A673 (cell line): ENCODE measurements at regions of chr13 and their contacts with region 1.

Region 1: DNA sequence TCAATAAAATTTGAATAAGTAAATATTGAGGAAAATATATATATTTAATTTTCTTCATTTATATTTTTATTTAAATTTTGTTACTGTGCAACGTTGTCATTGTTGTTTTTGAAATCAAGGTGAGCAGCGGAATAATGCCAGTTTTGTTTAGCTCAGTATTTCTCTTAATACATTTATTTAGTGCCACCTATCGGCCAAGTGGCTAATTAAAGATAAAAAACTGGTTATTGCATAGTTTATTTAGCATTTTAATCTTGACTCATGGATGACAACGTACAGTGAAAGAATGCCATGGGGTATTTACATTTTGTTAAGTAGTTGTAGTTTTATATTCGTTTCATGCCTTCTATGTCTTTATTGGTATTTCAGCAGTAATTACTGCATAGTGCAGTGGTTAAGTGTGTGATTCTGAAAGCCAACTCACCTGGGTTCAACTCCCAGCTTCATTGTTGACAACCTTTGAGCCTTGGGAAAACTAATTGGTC is 265.9 kb downstream of the MYO16 start:
- DNase-seq: peak; percentile 74
- H3K4me3 ChIP-seq: no peak overlapping the region
- H3K27ac ChIP-seq: no peak overlapping the region
- H3K4me1 ChIP-seq: peaks cover 13% of the 10 kb centered on the region
- H3K27me3 ChIP-seq: no peaks in the 10 kb centered on the region
- CTCF ChIP-seq: peak; percentile 64

Region 2: DNA sequence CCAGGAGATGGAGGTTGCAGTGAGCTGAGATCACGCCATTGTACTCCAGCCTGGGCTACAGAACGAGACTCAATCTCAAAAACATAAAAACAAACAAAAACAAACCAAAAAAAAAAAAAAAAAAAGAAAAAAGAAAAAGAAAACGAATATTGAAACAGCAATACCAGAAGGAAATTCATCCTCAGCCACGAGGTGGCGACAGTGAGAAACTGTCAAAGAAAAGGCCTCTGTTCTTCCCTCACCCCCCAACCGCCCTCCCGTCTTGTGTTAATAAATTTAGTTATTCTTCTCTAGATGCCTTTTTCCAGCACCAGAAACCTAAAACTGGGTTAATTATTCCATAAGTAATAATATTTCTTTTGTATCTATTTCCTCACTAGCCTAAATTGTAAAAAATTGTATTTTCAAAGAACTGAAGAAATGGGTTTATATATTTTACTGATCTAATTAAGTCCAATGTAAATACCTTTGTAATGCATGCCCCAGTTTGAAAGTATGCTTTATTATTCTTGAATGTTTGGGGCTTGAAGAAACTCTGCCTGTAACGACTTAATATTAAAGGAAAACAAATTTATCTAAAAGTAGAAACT is 718.5 kb before region 1 on chr13:
- CTCF ChIA-PET with region 1: no interaction called
- POLR2A ChIA-PET with region 1: no interaction called
- intact Hi-C with region 1: loop called (anchors 5 kb)
- DNase-seq: peak; percentile 61
- H3K4me3 ChIP-seq: no peak overlapping the region
- H3K27ac ChIP-seq: no peak overlapping the region
- H3K4me1 ChIP-seq: no peaks in the 10 kb centered on the region
- H3K27me3 ChIP-seq: no peaks in the 10 kb centered on the region
- CTCF ChIP-seq: peak; percentile 70

Region 3: DNA sequence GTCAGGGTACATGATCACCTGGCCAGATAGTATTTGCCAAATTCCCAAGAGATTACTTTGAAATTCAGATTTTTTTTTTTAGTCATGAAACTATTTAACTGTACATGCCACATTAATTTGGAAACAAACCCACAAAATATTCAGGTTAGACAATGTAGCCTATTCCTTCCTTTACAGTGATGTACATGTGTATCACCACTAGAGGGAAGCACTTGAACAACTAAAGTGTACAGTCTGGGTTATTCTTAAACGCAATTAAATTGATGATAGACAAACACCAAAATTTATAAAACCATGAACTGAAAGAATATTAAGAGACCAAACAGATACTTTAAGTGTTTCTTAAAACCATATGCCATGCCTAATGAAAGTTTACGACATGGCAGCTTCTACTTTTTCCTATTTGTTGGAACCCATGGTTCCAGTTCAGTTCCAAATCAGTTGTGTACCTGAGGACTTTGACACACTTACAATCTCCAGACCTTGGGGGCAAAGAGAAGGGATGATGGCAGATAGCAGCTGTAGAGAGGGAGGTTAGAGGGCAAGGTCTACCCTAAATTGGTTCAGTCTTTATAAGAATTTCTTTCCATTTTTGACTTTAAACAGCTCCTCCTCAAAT is 572.9 kb before region 1 on chr13:
- CTCF ChIA-PET with region 1: interaction called, 3 read pairs
- POLR2A ChIA-PET with region 1: no interaction called
- intact Hi-C with region 1: loop called (anchors 2 kb)
- DNase-seq: peak; percentile 62
- H3K4me3 ChIP-seq: no peak overlapping the region
- H3K27ac ChIP-seq: no peak overlapping the region
- H3K4me1 ChIP-seq: peaks cover 13% of the 10 kb centered on the region
- H3K27me3 ChIP-seq: no peaks in the 10 kb centered on the region
- CTCF ChIP-seq: peak; percentile 78

Region 4: GRCh38 chr13:108508263-108508662 is 387.0 kb before region 1 on chr13:
- CTCF ChIA-PET with region 1: no interaction called
- POLR2A ChIA-PET with region 1: no interaction called
- intact Hi-C with region 1: loop called (anchors 5 kb)
- DNase-seq: peak; percentile 45
- H3K4me3 ChIP-seq: no peak overlapping the region
- H3K27ac ChIP-seq: no peak overlapping the region
- H3K4me1 ChIP-seq: no peaks in the 10 kb centered on the region
- H3K27me3 ChIP-seq: no peaks in the 10 kb centered on the region
- CTCF ChIP-seq: peak; percentile 64

Region 5: GRCh38 chr13:108609353-108609752 is 285.9 kb before region 1 on chr13:
- CTCF ChIA-PET with region 1: interaction called, 11 read pairs
- POLR2A ChIA-PET with region 1: no interaction called
- intact Hi-C with region 1: loop called (anchors 2 kb)
- DNase-seq: peak; percentile 41
- H3K4me3 ChIP-seq: no peak overlapping the region
- H3K27ac ChIP-seq: no peak overlapping the region
- H3K4me1 ChIP-seq: no peaks in the 10 kb centered on the region
- H3K27me3 ChIP-seq: no peaks in the 10 kb centered on the region
- CTCF ChIP-seq: peak; percentile 63

Region 6: DNA sequence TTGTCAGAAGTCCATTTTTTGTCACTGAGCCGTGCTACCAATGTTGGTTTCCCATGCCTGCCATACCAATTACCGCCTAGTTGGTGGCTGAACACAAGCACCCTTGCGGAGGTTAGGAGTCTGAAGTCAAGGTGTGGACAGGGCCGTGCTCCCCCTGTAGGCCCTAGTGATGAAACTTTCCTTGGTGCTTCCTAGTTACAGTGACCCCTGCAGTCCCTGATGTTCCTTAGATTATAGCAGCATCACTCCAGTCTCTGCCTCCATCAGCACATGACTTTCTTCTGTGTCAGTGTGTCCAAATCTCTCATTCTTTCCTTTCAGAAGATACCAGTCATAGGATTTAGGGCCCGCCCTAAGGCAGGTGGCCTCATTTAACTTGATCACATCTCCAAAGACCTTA is 166.9 kb before region 1 on chr13:
- CTCF ChIA-PET with region 1: no interaction called
- POLR2A ChIA-PET with region 1: no interaction called
- intact Hi-C with region 1: no loop called
- DNase-seq: no peak
- H3K4me3 ChIP-seq: no peak overlapping the region
- H3K27ac ChIP-seq: no peak overlapping the region
- H3K4me1 ChIP-seq: no peaks in the 10 kb centered on the region
- H3K27me3 ChIP-seq: no peaks in the 10 kb centered on the region
- CTCF ChIP-seq: 0 out of 2 replicates have a peak, but pooled peaks have one; percentile 14